Esophagus muscularis mucosa (tissue), 4 donors: ENCODE measurements at regions of chr7 and their contacts with region 1.

Region 1: GRCh38 chr7:98280791-98281756 is at the start of gene BRI3:
- DNase-seq: peak; percentile 99
- H3K4me3 ChIP-seq: peak within 1 kb of the TSS; percentile 87 to 100 (median 100)
- H3K27ac ChIP-seq: peak within 1 kb of the TSS; percentile 93 to 97 (median 96)
- H3K4me1 ChIP-seq: peaks cover 47 to 60% (median 59%) of the 10 kb centered on the region in 4 donors
- H3K27me3 ChIP-seq: no peaks in the 10 kb centered on the region
- CTCF ChIP-seq: no peak
- EP300 ChIP-seq: no peak
- POLR2A ChIP-seq: peak; percentile 83
- total RNA-seq, gene BRI3: 34.5 to 74.7 (median 55.3) TPM

Region 2: DNA sequence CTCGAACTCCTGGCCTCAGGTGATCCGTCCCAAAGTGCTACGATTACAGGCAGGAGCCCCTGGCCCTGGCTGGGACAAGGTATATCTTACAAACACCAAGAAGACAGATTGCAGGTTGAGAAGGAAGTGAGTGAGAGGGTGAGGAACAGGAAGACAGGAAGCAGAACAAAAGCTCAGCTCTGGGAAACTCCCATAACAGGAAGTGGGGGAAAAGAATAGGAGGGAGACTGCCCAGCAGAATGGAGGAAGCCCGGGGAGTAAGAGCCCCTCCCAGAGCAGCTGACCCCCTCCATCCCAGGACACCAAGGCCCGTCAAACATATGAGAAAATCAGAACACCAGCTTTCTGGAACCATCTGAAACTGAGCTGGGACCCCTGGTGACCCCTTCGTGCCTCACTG is 32.0 kb before region 1 on chr7:
- intact Hi-C with region 1: loop called (anchors 5 kb)
- DNase-seq: no peak
- H3K4me3 ChIP-seq: no peak overlapping the region
- H3K27ac ChIP-seq: peak overlapping the region in 3 of 4 donors; percentile 14 to 91 (median 49)
- H3K4me1 ChIP-seq: peaks cover 43 to 57% (median 51%) of the 10 kb centered on the region in 4 donors
- H3K27me3 ChIP-seq: no peaks in the 10 kb centered on the region
- CTCF ChIP-seq: no peak
- EP300 ChIP-seq: no peak
- POLR2A ChIP-seq: no peak